GM18951 (cell line): ENCODE measurements at regions of chr4 and their contacts with region 1.

Region 1: DNA sequence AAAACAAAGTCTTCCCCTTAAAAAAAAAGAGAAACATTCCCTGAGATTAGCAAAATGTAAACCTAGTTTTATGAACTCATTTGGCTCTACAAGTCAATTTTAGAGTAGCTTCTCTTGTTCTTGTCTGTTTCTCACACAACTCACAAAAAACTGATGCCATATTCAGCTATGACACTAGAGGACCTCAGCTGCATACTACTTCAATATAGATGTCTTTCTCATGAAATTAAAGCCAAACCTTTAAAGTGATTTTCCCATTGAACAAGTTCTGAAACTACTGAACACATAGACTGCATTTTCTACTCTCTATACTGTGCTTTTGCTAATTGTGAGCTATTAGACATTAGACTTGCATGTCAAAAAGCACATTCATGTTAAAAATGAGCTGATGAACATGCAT is 49.8 kb downstream of the TBCK start:
- POLR2A ChIP-seq: no peak

Region 2: GRCh38 chr4:105758958-105759357 is 507.2 kb before region 1 on chr4:
- in situ Hi-C with region 1: no loop called
- POLR2A ChIP-seq: no peak

Region 3: DNA sequence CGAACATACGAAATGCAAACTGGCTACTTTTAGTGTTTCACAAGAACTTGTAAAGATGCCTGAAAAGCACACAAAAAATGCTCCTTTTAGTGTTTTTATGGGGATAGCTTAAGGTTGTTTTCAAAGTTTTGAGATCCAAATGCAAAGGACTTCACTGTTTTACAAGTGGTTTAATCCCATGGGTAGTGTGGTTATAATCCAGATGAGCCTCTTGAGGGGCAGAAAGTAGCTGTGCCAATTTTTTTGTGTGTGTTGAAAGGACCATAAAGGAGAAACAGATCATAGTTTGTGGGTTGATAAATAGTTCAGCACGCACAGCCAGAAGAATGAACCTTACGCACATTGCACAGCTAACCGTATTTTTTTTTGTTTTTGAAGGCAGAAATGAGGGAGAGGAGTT is 229.3 kb after region 1 on chr4:
- in situ Hi-C with region 1: loop called (anchors 25 kb)
- POLR2A ChIP-seq: no peak